KBM-7 (cell line): ENCODE measurements at regions of chr19 and their contacts with region 1.

Region 1: DNA sequence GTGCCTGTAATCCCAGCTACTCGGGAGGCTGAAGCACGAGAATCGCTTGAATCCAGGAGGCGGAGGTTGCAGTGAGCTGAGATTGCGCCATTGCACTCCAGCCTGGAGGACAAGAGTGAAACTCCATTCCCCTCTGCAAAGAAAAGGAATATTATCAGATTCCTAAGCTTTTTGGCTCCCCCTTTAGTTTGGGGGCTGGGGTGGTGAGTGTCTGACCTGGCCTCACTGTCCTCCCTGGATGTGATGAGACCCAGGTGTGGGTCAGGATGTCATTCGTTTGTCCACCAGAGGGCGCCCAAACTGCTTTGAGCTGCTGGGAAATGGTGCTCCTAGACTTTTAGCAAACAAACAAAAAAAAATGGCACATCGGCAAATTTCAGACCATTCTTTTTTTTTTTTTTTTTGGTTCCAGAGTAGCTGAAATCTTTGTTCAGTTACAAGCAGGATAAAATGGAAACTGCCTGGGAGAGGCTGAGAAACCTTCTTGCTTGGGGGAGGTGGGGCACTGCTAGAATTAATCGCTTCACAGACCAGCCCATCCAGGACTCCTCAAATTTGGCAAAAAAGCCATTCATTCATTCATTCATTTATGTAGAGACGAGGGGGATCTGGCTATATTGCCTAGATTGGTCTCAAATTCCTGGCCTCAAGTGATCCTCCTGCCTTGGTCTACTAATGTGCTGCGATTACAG is 29.4 kb downstream of the SPC24 start:
- DNase-seq: peak; percentile 82

Region 2: GRCh38 chr19:11035441-11036377 is 90.4 kb before region 1 on chr19:
- in situ Hi-C with region 1: loop called (anchors 10 kb)
- DNase-seq: peak; percentile 88